ENCODE measurements at regions of chr5 and their contacts with region 1.

Region 1: GRCh38 chr5:176447982-176448608 is at the start of gene FAF2:
- DNase-seq: peak; percentile 95 to 100 (median 97)
- H3K4me3 ChIP-seq: peak within 1 kb of the TSS; percentile 81
- H3K27ac ChIP-seq: peak within 1 kb of the TSS; percentile 87 to 96
- H3K4me1 ChIP-seq: peaks cover 8% of the 10 kb centered on the region
- H3K27me3 ChIP-seq: no peaks in the 10 kb centered on the region
- CTCF ChIP-seq: peak; percentile 96 to 98 (median 97)
- EP300 ChIP-seq: no peak
- POLR2A ChIP-seq: peak; percentile 97
- total RNA-seq, gene FAF2: 17.2 to 46.7 (median 34.4) TPM

Region 2: GRCh38 chr5:176388444-176389134 is 59.5 kb before region 1 on chr5 and contains the starts of genes HIGD2A and NOP16:
- intact Hi-C with region 1: loop called in 1 of 4 experiments (anchors 2 kb)
- DNase-seq: peak; percentile 98 to 100 (median 99)
- H3K4me3 ChIP-seq: peak within 1 kb of the TSS; percentile 76
- H3K27ac ChIP-seq: peak within 1 kb of the TSS; percentile 87 to 95
- H3K4me1 ChIP-seq: peaks cover 7% of the 10 kb centered on the region
- H3K27me3 ChIP-seq: no peaks in the 10 kb centered on the region
- CTCF ChIP-seq: peak in 2 of 3 donors; percentile 39 to 61
- EP300 ChIP-seq: no peak
- POLR2A ChIP-seq: no peak
- total RNA-seq, gene HIGD2A: 64.3 to 131 (median 100) TPM
- total RNA-seq, gene NOP16: 8.9 to 27.0 (median 17.9) TPM

Region 3: GRCh38 chr5:176415952-176416924 is 31.9 kb before region 1 on chr5 and contains the start of gene CLTB:
- intact Hi-C with region 1: loop called in 1 of 4 experiments (anchors 1 kb)
- DNase-seq: peak; percentile 88 to 97 (median 93)
- H3K4me3 ChIP-seq: peak within 1 kb of the TSS; percentile 100
- H3K27ac ChIP-seq: peak within 1 kb of the TSS; percentile 86 to 89
- H3K4me1 ChIP-seq: peaks cover 8% of the 10 kb centered on the region
- H3K27me3 ChIP-seq: no peaks in the 10 kb centered on the region
- CTCF ChIP-seq: peak; percentile 52 to 97 (median 94)
- EP300 ChIP-seq: no peak
- POLR2A ChIP-seq: peak; percentile 93
- total RNA-seq, gene CLTB: 79.7 to 138 (median 115) TPM

Region 4: DNA sequence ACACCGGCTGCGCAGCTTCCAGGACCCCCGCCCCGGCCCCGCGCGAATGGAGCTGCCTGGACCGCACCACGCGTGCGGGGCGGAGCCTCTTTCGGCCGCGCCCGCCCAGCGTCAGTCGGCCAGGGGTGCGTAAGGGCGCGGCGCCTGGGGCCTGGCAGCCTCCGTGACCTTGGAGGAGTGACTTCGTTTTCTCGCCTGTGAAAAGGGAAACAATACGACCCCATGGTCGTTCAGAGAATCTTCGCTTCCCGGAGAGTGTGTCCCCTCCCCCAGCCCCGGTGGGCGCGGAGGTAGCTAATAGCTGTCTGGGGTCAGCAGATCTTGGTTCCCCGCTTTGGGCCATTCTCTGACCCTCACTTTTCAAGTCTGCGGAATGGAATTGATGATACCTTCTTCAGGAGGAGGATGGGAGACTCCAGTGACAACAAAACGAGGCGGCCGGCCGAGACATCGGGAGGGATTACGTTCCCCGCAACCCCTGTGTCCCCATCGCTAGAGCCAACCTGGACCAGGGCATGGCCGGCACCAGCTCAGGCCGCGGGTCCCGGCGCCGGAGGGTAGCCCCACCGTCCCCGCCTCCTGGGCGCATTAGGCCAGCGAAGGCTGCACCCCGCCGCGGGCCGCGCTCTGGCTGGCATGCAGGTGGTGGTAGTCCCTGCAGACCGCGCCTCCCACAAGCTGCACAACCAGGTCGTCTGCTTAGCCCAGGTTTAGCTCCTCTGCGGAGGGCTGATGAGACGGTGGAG is 95.5 kb after region 1 on chr5:
- intact Hi-C with region 1: loop called in 1 of 4 experiments (anchors 5 kb)
- DNase-seq: peak; percentile 68 to 87 (median 79)
- H3K4me3 ChIP-seq: peak overlapping the region; percentile 79
- H3K27ac ChIP-seq: peak overlapping the region; percentile 72 to 88
- H3K4me1 ChIP-seq: peaks cover 7% of the 10 kb centered on the region
- H3K27me3 ChIP-seq: no peaks in the 10 kb centered on the region
- CTCF ChIP-seq: no peak
- EP300 ChIP-seq: no peak
- POLR2A ChIP-seq: peak; percentile 26

Region 5: GRCh38 chr5:176901260-176902101 is 453.4 kb after region 1 on chr5:
- intact Hi-C with region 1: no loop called
- DNase-seq: no peak
- H3K4me3 ChIP-seq: no peak overlapping the region
- H3K27ac ChIP-seq: no peak overlapping the region
- H3K4me1 ChIP-seq: no peaks in the 10 kb centered on the region
- H3K27me3 ChIP-seq: no peaks in the 10 kb centered on the region
- CTCF ChIP-seq: no peak
- EP300 ChIP-seq: no peak
- POLR2A ChIP-seq: no peak